ENCODE measurements at regions of chr1 and their contacts with region 1.

Region 1: GRCh38 chr1:116485071-116485735 is 85.6 kb downstream of the CD58 start:
- DNase-seq: peak; percentile 51 to 66
- ATAC-seq: peak; percentile 90 to 98
- H3K4me3 ChIP-seq: no peak overlapping the region
- H3K27ac ChIP-seq: peak overlapping the region in 1 of 2 experiments; percentile 55; a peak in 3 of 6 replicates
- H3K4me1 ChIP-seq: 0 out of 3 replicates have a peak, but pooled peaks cover 2% of the 10 kb centered on the region
- CTCF ChIP-seq: peak; percentile 78
- EP300 ChIP-seq: no peak
- POLR2A ChIP-seq: no peak
- RAD21 ChIP-seq: peak; percentile 83 to 85

Region 2: GRCh38 chr1:116133696-116134650 is 351.2 kb before region 1 on chr1:
- CTCF ChIA-PET with region 1: interaction called, 209 read pairs
- POLR2A ChIA-PET with region 1: interaction called, 3 read pairs
- DNase-seq: peak in 1 of 2 experiments; percentile 13
- ATAC-seq: no peak
- H3K4me3 ChIP-seq: no peak overlapping the region
- H3K27ac ChIP-seq: no peak overlapping the region
- H3K4me1 ChIP-seq: no peaks in the 10 kb centered on the region
- CTCF ChIP-seq: peak; percentile 8; the same call in 1 of the 3 replicates
- EP300 ChIP-seq: no peak
- POLR2A ChIP-seq: no peak
- RAD21 ChIP-seq: no peak

Region 3: DNA sequence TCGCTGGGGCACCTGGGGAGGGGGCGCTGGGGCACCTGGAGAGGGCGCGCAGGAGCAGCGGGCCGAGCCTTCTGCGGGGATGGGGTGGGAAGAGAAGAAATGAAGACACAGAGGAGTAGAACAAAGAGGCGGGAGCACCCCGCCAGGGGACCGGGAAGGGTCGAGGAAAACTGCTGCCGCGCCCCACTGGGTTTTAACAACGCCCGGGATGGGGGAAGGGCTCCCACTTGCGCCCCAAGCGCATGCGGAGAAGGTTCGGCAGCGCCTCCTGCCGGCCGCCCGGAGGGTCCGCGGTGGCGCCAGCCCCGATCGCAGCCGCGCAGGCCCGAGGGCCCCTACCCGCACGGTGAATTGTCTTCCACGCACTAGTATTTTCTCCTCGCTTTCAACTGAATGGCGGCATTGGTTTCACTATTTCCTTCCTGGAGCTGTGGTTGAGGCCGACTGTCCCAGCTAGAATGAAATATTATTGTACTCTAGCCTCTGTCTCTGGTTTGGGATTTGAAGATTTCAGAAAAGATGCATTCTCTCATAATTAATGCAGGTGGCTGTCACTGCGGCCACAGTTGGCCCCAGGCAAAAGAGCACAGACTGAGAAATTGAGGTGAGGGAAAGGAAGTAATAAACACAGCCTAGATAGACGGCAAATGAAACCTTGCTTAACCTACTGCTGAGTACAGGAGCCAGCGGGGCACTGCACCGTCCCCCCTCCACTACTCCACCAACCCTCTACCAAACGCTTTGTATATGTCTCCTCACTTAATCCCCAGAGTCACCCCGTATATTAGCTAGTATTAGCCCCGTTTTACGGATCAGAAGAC is 316.7 kb before region 1 on chr1:
- CTCF ChIA-PET with region 1: interaction called, 15 read pairs
- POLR2A ChIA-PET with region 1: no interaction called
- DNase-seq: peak; percentile 48 to 51
- ATAC-seq: peak; percentile 94 to 98
- H3K4me3 ChIP-seq: peak overlapping the region; percentile 74
- H3K27ac ChIP-seq: peak overlapping the region; percentile 87 to 93
- H3K4me1 ChIP-seq: no peaks in the 10 kb centered on the region
- CTCF ChIP-seq: peak; percentile 86
- EP300 ChIP-seq: no peak
- POLR2A ChIP-seq: no peak
- RAD21 ChIP-seq: peak; percentile 11 to 61; a peak in 2 of 5 replicates

Region 4: GRCh38 chr1:116457946-116458604 is 27.1 kb before region 1 on chr1:
- CTCF ChIA-PET with region 1: interaction called, 13 read pairs
- POLR2A ChIA-PET with region 1: no interaction called
- DNase-seq: no peak
- ATAC-seq: no peak
- H3K4me3 ChIP-seq: no peak overlapping the region
- H3K27ac ChIP-seq: no peak overlapping the region
- H3K4me1 ChIP-seq: no peaks in the 10 kb centered on the region
- CTCF ChIP-seq: no peak
- EP300 ChIP-seq: no peak
- POLR2A ChIP-seq: no peak
- RAD21 ChIP-seq: no peak

Region 5: DNA sequence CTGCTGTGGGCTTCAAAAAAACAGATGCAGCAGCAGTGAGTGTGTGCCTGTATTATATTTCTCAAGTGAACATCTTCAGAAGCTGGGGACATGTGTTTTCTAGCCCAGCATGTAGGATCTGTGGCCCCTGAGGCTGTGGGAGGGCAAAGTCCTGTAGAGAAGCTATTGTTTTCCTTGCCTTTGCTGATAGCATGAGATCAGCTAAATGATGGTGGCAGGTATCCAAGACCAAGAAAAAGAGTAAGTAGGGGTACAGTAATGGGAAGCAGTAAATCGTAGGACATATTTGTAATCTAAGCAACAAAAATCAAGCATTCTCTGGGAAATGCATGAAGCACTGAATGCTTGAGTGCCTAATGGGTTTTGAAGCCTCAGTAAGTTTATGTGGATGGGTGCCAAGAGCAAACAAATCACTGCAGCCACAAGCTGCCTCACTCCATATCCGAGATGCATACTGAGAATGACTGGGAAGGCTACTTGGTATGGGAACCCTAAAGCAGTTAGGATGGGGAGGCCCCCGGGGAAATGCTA is 12.7 kb before region 1 on chr1:
- CTCF ChIA-PET with region 1: interaction called, 39 read pairs
- POLR2A ChIA-PET with region 1: no interaction called
- DNase-seq: no peak
- ATAC-seq: no peak
- H3K4me3 ChIP-seq: no peak overlapping the region
- H3K27ac ChIP-seq: 0 out of 6 replicates have a peak overlapping the region, but pooled peaks of 1 of the 2 experiments have one; percentile 27
- H3K4me1 ChIP-seq: peaks cover 30% of the 10 kb centered on the region
- CTCF ChIP-seq: no peak
- EP300 ChIP-seq: no peak
- POLR2A ChIP-seq: no peak
- RAD21 ChIP-seq: no peak

Region 6: DNA sequence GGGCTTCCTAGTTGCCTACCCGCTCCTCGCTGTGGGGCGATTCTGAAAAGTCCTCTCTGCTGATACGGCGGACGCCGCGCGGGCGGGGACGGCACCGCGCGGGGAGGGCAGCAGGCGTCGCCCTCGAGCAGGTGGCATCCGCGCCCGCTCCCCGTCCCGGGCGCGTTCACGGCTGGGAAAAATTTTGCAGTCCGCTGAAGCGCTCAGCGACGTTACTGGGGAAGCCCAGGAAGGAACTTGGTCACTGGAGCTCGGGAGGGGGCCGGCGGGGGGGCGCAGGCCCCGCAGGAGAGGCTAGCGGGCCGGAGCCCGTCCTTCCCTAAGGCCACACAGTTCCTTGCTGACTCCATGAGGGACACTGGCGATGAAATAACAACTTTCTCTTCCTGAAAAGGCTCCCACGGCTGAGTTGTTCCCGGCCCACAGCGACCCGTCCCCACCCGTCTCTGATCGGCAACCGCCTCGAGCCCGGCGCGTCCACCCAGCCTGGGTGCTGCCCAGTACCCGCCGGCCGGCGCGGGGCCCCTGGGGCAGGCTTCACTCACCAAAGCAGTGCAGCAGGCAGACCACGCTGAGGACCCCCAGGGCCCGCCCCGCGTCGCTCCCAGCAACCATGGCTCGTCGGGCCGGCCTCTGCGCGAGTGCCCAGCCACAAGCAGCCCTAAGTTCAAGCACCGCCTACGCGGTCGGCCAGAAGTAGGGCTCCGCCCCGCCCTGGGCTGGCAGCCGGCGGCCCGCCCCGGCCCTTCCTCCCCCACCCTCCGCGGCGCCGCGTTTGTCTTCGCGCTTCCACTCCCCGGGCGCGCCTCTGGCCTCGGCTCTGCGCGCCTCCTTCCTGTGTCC is 85.4 kb after region 1 on chr1 and contains the start of gene CD58:
- CTCF ChIA-PET with region 1: no interaction called
- POLR2A ChIA-PET with region 1: no interaction called
- DNase-seq: peak; percentile 69 to 79
- ATAC-seq: peak; percentile 89 to 96
- H3K4me3 ChIP-seq: peak within 1 kb of the TSS; percentile 79
- H3K27ac ChIP-seq: peak within 1 kb of the TSS; percentile 97 to 100
- H3K4me1 ChIP-seq: peaks cover 37% of the 10 kb centered on the region
- CTCF ChIP-seq: peak; percentile 61
- EP300 ChIP-seq: no peak
- POLR2A ChIP-seq: peak; percentile 72
- RAD21 ChIP-seq: peak in 1 of 2 experiments; percentile 13; a peak in 2 of 5 replicates
- polyA plus RNA-seq, gene CD58: 36.0 and 38.4 TPM in 2 replicates